ENCODE measurements at regions of chr15 and their contacts with region 1.

Region 1: GRCh38 chr15:73051811-73052678 is at the start of gene NEO1:
- DNase-seq: peak; percentile 70
- H3K4me3 Mint-ChIP-seq: peak within 1 kb of the TSS; percentile 85
- H3K27ac Mint-ChIP-seq: peak within 1 kb of the TSS; percentile 73
- H3K4me1 Mint-ChIP-seq: peaks cover 7% of the 10 kb centered on the region
- H3K27me3 Mint-ChIP-seq: peaks cover 23% of the 10 kb centered on the region
- CTCF ChIP-seq: no peak
- total RNA-seq, gene NEO1: 13.2 and 15.1 TPM in 2 replicates

Region 2: GRCh38 chr15:72451224-72451623 is 600.8 kb before region 1 on chr15:
- CTCF ChIA-PET with region 1: no interaction called
- POLR2A ChIA-PET with region 1: no interaction called
- intact Hi-C with region 1: no loop called
- DNase-seq: no peak
- H3K4me3 Mint-ChIP-seq: no peak overlapping the region
- H3K27ac Mint-ChIP-seq: no peak overlapping the region
- H3K4me1 Mint-ChIP-seq: no peaks in the 10 kb centered on the region
- H3K27me3 Mint-ChIP-seq: peaks cover 4% of the 10 kb centered on the region
- CTCF ChIP-seq: no peak

Region 3: DNA sequence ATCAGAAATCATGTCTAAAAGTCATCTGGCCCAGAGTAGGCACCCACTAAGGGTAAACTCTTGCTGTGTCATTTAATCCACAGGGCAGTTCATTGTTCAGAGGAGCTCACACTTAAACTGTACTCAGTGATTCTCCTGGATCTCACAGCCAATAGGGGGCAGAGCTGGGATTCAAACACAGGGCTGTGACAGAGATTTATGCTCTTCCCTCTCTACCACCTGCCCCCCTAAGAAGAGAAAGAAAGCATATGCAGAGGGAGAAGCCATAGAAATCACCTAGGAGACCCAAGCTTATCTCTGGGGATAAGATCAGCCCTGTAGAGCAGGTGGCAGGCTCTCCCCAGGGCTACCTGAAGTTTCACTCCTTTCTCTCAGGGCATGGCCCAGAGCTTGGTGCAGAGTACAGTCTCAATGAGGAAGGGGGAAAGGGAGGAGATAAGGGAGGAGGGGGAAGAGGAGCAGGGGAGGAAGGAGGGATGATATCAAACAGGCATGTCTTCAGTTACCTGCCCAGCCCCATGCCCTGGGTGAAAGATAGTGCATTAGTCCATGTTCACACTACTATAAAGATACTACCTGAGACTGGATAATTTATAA is 216.7 kb before region 1 on chr15:
- CTCF ChIA-PET with region 1: no interaction called
- POLR2A ChIA-PET with region 1: no interaction called
- intact Hi-C with region 1: loop called (anchors 5 kb)
- DNase-seq: peak; percentile 25
- H3K4me3 Mint-ChIP-seq: no peak overlapping the region
- H3K27ac Mint-ChIP-seq: no peak overlapping the region
- H3K4me1 Mint-ChIP-seq: peaks cover 8% of the 10 kb centered on the region
- H3K27me3 Mint-ChIP-seq: peaks cover 24% of the 10 kb centered on the region
- CTCF ChIP-seq: peak; percentile 31

Region 4: GRCh38 chr15:73035221-73035620 is 16.8 kb before region 1 on chr15:
- CTCF ChIA-PET with region 1: interaction called, 4 read pairs
- POLR2A ChIA-PET with region 1: interaction called, 13 read pairs
- intact Hi-C with region 1: no loop called
- DNase-seq: no peak
- H3K4me3 Mint-ChIP-seq: no peak overlapping the region
- H3K27ac Mint-ChIP-seq: no peak overlapping the region
- H3K4me1 Mint-ChIP-seq: no peaks in the 10 kb centered on the region
- H3K27me3 Mint-ChIP-seq: peaks cover 16% of the 10 kb centered on the region
- CTCF ChIP-seq: no peak

Measured in MCF 10A (cell line).